ENCODE measurements at regions of chr14 and their contacts with region 1.

Region 1: DNA sequence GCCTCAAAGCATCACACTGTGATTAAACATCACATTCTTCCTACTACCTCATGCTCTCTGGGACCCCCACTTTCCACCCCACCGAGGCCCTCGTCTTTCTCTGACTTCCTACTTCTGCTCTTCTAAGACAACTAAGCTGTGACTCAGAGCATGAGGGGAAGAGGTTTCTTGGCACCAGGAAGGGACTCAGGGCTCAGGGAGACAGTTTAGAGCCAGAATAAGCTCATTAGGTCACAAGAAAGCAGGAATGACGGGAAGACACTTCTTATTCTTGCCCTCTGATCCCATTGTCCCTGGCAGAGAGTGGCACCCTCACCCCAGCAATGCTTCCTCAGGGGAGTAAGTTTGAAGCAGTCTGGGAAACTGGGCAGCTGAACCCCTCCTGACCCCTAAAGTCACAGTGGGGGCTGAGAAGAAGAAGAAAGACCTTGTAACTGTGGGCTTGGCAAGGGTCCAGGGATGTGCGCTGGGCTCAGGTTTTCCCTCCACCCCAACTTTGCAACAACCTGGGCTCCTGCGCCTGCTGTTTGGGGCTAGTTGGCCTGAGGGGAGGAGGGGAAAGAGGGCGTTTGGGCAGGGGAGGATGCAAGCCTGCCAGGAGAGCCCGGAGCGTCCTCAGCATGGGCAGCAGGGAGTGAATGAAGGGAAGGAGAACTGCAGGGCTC is 64.6 kb upstream of the ACTN1 start:
- DNase-seq: peak; percentile 73 to 78
- ATAC-seq: peak; percentile 56
- H3K4me3 ChIP-seq: no peak overlapping the region
- H3K27ac ChIP-seq: peak overlapping the region; percentile 69 to 77
- H3K4me1 ChIP-seq: peaks cover 2 to 15% of the 10 kb centered on the region in 2 donors
- H3K27me3 ChIP-seq: no peaks in the 10 kb centered on the region

Region 2: DNA sequence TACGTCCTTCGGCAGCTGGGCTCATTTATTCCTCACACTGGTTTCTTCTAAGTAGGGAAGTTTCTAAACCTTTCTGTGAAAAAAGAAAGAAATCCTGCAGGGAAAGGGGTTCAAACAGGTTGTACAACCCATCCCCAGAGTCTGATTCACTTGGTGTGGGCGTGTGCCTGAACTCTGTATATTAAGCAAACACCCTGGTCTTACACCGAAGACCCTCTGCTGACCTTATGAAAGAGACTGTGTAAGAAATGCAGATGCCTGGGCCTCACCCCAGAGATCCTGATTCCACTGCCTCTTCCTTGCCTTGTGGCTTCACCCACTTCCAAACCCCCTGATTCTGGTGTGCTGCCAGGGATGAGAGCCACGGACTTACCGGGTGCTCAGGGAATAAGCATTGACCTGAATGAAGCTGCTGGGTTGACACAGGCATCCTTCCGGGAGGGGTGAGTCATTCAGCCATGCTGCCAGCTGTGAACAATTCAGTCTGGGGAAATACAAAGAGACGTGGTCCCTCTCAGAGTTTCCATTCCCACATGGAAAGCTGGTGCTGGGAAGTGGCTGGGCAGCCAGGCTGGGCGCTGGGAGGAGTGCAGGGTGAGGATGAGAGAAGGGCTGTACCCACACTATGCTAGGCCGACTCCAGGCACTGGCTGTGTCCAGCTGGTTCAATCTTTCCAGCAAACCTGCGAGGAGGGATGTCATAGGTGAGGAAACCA is 38.1 kb before region 1 on chr14:
- intact Hi-C with region 1: loop called (anchors 2 to 5 kb)
- DNase-seq: peak; percentile 91 to 94
- ATAC-seq: peak; percentile 90
- H3K4me3 ChIP-seq: no peak overlapping the region
- H3K27ac ChIP-seq: peak overlapping the region; percentile 32 to 69
- H3K4me1 ChIP-seq: peaks cover 0 to 2% of the 10 kb centered on the region in 2 donors
- H3K27me3 ChIP-seq: no peaks in the 10 kb centered on the region

Region 3: GRCh38 chr14:69079183-69079742 is 35.5 kb after region 1 on chr14:
- intact Hi-C with region 1: loop called (anchors 2 to 5 kb)
- DNase-seq: no peak
- ATAC-seq: peak; percentile 57
- H3K4me3 ChIP-seq: no peak overlapping the region
- H3K27ac ChIP-seq: peak overlapping the region; percentile 89 to 97
- H3K4me1 ChIP-seq: peaks cover 0 to 6% of the 10 kb centered on the region in 2 donors
- H3K27me3 ChIP-seq: no peaks in the 10 kb centered on the region

Region 4: GRCh38 chr14:69090187-69090789 is 46.6 kb after region 1 on chr14:
- intact Hi-C with region 1: loop called in 1 of 2 experiments (anchors 5 kb)
- DNase-seq: no peak
- ATAC-seq: peak; percentile 63
- H3K4me3 ChIP-seq: no peak overlapping the region
- H3K27ac ChIP-seq: peak overlapping the region in 1 of 2 donors; percentile 28
- H3K4me1 ChIP-seq: peaks cover 3 to 4% of the 10 kb centered on the region in 2 donors
- H3K27me3 ChIP-seq: no peaks in the 10 kb centered on the region

Region 5: GRCh38 chr14:69129264-69129880 is 85.6 kb after region 1 on chr14:
- intact Hi-C with region 1: no loop called
- DNase-seq: peak; percentile 79 to 81
- ATAC-seq: peak; percentile 88
- H3K4me3 ChIP-seq: no peak overlapping the region
- H3K27ac ChIP-seq: no peak overlapping the region
- H3K4me1 ChIP-seq: peaks cover 0 to 14% of the 10 kb centered on the region in 2 donors
- H3K27me3 ChIP-seq: no peaks in the 10 kb centered on the region

Measured in aorta (tissue), 5 donors.